ENCODE measurements at regions of chr14 and their contacts with region 1.

Region 1: DNA sequence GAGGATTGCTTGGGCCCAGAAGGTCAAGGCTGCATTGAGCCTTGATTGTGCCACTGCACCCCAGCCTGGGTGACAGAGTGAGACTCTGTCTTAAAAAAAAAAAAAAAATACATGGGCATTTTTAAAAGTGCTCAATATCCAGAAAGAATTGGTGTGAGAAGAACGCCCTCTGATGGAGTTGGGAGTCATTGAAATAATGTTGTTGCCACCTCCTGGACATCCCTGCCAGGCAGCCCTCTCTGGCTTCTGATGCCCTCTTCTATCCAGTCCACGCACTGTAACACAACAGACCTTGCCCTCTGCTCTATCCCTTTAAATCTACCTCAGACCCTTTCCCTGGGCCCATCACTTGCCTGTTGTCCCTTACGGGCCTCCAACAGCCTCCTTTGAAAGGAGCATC is 4.9 kb downstream of the PTGDR start:
- DNase-seq: no peak
- H3K4me3 ChIP-seq: no peak overlapping the region
- CTCF ChIP-seq: peak; percentile 31

Region 2: GRCh38 chr14:52146504-52146903 is 125.9 kb before region 1 on chr14:
- CTCF ChIA-PET with region 1: interaction called, 14 read pairs
- POLR2A ChIA-PET with region 1: no interaction called
- DNase-seq: no peak
- H3K4me3 ChIP-seq: no peak overlapping the region
- CTCF ChIP-seq: no peak

Measured in AG04449 (cell line).